Heart right ventricle (tissue), 16 donors: ENCODE measurements at regions of chr3 and their contacts with region 1.

Region 1: GRCh38 chr3:4712143-4712542 is 219.0 kb downstream of the ITPR1 start:
- DNase-seq: no peak
- ATAC-seq: peak in 2 of 8 donors; percentile 36 to 39
- H3K4me3 ChIP-seq: no peak overlapping the region
- H3K27ac ChIP-seq: peak overlapping the region in 1 of 10 donors; percentile 68
- H3K4me1 ChIP-seq: peaks cover 0 to 28% (median 5%) of the 10 kb centered on the region in 9 donors
- H3K27me3 ChIP-seq: no peaks in the 10 kb centered on the region
- CTCF ChIP-seq: no peak

Region 2: GRCh38 chr3:4656059-4656458 is 56.1 kb before region 1 on chr3:
- intact Hi-C with region 1: loop called in 1 of 10 experiments (anchors 5 kb)
- DNase-seq: peak; percentile 52 to 67
- ATAC-seq: peak; percentile 83 to 92 (median 88)
- H3K4me3 ChIP-seq: no peak overlapping the region
- H3K27ac ChIP-seq: peak overlapping the region in 4 of 10 donors; percentile 32 to 64 (median 40)
- H3K4me1 ChIP-seq: peaks cover 0 to 18% (median 11%) of the 10 kb centered on the region in 9 donors
- H3K27me3 ChIP-seq: no peaks in the 10 kb centered on the region
- CTCF ChIP-seq: peak; percentile 60 to 91 (median 81)

Region 3: DNA sequence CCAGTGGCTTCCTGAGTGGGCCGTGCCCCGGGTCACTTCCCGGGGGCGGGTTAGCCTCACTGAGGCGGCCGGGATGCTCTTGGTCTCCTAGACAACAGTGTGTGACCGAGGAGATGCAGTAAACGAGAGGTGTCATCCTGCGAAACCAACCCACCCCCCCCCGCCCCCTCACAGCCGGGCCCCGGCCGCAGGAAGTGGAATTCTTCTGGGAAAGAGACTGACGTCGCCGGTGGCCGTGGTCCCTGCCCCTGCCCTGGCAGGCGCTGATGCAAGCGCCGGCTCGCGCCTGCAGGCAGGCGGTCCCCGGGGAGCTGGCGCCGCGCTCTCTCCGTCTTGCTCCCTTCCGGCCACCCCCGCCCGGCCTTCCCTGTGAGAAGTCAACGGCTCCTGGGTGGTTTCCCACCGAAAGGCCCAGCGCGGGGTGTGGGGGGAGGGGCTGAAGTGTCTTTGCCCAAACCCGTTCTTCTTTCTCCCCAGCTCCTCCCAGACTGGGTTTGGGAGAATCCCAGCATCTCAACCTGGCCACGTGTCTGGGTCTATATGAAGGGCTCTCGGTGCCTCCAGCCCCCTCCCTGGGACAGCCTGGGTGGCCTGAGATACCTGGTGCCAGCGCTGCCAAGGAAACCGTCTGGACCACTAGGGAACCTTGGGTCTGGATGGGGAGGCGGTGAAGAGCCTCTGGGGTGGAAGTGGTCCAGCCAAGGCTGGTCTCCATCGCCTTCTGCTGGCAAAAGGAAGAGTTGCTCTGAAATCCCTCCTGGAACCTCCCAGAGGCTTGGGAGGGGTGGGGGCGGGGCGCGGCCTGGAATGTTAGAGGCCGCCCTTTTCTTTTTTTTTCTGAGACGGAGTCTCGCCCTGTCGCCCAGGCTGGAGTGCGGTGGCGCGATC is 314.4 kb after region 1 on chr3:
- intact Hi-C with region 1: loop called in 3 of 10 experiments (anchors 1 to 10 kb)
- DNase-seq: peak; percentile 92 to 93
- ATAC-seq: peak; percentile 91 to 97 (median 95)
- H3K4me3 ChIP-seq: peak overlapping the region; percentile 8 to 63 (median 53)
- H3K27ac ChIP-seq: peak overlapping the region; percentile 75 to 94 (median 86)
- H3K4me1 ChIP-seq: peaks cover 0 to 23% (median 5%) of the 10 kb centered on the region in 9 donors
- H3K27me3 ChIP-seq: no peaks in the 10 kb centered on the region
- CTCF ChIP-seq: peak; percentile 51 to 76 (median 68)

Region 4: DNA sequence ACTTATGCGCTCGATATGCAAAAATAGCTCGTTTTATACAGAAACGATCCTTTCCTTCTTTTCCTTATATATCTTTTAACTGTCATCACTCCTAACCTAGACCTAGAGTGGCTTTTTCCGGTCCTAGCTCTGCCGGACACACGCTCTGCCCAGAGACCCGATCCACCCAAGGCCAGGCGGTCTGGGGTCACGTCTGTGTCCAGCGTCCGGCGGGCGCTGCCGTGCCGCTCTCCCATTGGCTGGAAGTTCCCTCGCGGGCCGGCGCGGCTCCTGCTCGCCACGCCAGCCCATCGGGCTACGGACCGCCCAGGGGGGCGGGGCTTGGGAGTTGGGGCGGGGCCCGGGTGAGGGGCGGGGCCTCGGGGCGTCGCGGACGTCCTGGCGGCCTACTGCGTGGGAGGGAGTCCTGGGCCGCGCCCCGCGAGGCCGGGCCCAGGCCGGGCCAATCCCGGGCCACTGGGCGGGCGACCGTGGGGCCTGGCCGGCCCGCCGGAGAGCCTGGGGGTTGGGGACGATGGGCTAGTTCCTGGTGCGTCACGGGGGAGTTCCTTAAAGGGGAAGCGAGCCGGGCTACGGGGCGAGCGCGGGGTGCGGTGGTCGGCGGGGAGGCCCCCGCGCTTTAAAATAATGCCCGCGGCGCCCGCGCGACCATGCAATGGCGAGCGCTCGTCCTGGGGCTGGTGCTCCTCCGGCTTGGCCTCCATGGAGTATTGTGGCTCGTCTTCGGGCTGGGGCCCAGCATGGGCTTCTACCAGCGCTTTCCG is 475.2 kb after region 1 on chr3 and contains the start of gene EDEM1:
- intact Hi-C with region 1: loop called in 1 of 10 experiments (anchors 10 kb)
- DNase-seq: peak; percentile 93 to 97
- ATAC-seq: peak; percentile 96 to 99 (median 97)
- H3K4me3 ChIP-seq: peak within 1 kb of the TSS; percentile 51 to 98 (median 94)
- H3K27ac ChIP-seq: peak within 1 kb of the TSS; percentile 61 to 99 (median 95)
- H3K4me1 ChIP-seq: peaks cover 0 to 79% (median 40%) of the 10 kb centered on the region in 9 donors
- H3K27me3 ChIP-seq: no peaks in the 10 kb centered on the region
- CTCF ChIP-seq: no peak
- total RNA-seq, gene EDEM1: 6.7 to 19.0 (median 9.1) TPM